Common myeloid progenitor, CD34-positive (primary cell): ENCODE measurements at regions of chr19 and their contacts with region 1.

Region 1: DNA sequence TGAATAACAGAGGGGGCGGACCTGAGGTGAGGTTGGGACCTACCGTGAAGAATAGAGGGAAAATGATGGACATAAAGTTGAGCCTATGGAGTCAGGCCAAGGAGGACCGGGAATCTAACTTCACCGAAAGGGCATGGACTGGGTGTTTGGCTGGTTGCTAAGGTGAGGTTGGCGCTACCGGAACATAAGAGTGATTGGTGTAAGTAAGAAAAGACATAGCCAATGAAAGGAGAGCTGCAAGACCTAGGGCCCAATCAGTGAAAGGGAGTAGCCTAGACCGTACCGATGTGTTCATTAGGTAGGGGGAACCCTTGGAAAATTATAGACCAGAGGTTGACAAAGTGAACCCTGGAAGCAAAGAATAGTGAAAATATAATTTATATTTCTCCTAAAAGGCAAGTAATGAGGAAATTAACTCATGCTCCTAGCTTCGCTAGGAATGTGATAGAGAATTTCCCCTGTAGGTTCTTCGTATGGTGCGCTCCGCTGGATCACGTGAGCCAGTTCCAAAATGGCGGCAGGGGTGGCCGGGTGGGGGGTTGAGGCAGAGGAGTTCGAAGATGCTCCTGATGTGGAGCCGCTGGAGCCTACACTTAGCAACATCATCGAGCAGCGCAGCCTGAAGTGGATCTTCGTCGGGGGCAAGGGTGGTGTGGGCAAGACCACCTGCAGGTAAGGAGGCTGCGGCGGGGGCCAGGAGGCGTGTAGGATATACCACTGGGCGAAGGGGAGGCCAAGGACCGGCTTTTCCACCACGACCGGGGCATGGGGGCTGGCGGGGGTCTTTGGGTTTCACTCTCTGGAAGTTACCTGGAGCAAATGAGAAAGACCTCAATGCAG is at the start of gene GET3:
- DNase-seq: peak; percentile 99 to 100 (median 100)
- H3K4me3 ChIP-seq: peak within 1 kb of the TSS; percentile 76 to 95 (median 86)
- H3K27ac ChIP-seq: peak within 1 kb of the TSS; percentile 99 to 100
- H3K4me1 ChIP-seq: peaks cover 16 to 42% (median 37%) of the 10 kb centered on the region in 4 experiments
- H3K27me3 ChIP-seq: no peaks in the 10 kb centered on the region

Region 2: DNA sequence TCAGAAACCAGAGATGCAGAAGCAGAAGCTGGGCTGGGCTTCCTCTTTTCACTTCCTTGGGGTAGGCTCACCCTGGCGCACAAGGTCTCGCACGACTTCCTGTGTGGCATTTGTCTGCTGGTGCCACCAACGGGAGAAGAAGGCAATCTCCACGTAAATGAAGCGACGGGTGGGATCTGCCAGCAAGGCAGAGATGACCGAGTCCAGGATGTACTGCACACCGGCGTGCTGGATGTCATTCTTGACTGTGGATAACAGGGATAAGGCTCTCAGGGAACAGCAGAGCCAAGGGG is 72.0 kb before region 1 on chr19:
- CTCF ChIA-PET with region 1: no interaction called
- POLR2A ChIA-PET with region 1: no interaction called
- DNase-seq: peak; percentile 85 to 96 (median 94)
- H3K4me3 ChIP-seq: peak overlapping the region in 6 of 7 experiments; percentile 79 to 95 (median 84)
- H3K27ac ChIP-seq: peak overlapping the region in 1 of 2 experiments; percentile 15
- H3K4me1 ChIP-seq: peaks cover 4 to 50% (median 43%) of the 10 kb centered on the region in 4 experiments
- H3K27me3 ChIP-seq: no peaks in the 10 kb centered on the region

Region 3: DNA sequence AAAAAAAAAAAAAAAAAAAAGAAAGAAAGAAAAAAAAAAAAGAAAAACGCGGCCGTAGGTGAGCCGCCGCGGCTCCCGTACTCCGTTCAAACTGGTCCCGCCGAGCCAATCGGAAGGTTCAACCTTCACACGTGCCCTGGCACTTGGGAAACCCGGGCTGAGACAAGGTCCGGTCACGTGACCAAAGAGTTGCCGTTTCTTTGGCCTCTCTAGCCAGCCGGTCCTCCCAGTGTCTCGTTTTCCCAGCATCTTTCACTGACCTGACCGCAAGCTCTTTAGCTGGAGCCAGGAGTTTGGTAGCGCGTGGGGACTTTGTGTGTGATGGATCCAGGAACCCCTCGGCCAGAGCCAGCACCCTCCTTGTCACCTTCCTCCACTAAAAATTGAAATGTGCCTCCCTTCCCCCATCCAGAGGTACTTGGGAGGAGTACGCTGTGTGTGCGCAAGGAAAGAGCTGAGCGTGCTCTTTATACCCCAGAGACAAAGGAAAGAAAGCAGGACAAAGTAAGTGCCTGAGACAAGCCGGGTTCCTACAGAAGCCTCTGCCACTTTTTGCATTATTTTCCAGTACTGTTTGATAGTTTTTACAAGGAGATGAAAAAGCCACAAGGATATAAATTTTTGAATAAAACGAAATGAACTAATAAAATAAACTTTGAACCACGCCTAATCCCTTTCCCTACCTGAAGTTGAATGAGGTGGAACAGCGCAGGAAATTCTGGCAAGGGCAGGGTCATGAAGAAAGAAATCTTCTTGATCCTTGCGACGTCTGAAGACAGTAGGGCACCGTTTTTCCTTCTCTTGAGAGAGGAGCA is 14.4 kb before region 1 on chr19:
- CTCF ChIA-PET with region 1: interaction called, 776 read pairs
- POLR2A ChIA-PET with region 1: interaction called, 16 read pairs
- DNase-seq: peak; percentile 99
- H3K4me3 ChIP-seq: peak overlapping the region; percentile 67 to 95 (median 78)
- H3K27ac ChIP-seq: peak overlapping the region; percentile 81 to 92
- H3K4me1 ChIP-seq: peaks cover 12 to 35% (median 33%) of the 10 kb centered on the region in 4 experiments
- H3K27me3 ChIP-seq: no peaks in the 10 kb centered on the region